ENCODE measurements at regions of chr21 and their contacts with region 1.

Region 1: DNA sequence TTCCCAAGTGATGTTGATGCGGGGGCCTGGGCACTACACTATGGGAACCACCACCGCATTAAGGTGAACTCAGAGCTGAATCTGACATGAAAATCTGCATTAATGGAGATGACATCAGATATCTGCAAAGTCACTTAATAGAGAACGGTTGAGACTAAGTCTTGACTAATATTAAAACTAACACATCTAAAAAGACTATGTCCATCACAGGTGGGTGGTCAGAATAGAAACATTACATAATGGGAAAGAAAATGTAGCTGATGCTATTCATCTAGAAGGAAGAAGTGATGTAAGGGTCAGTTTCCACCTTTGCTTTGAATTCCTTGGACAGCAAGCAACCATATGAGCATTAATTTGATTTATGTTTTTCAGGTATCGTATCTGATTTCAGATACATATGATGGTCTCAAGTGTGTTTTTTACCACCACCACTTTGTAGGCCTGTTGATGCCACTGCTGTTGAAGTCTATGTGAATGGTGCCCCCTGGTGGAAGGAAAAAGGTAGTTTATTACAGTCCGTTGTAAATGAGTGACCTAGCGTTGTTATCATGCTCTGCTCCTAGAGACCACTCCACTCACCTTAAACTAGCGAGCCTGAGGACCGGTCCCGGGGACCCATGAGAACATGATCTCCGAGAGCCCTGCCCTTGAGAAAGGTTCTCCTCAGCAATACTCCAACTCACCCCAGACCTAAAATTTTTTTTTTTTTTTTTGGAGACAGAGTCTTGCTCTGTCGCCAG is 73.5 kb downstream of the BACH1 start:
- DNase-seq: no peak
- H3K4me3 ChIP-seq: no peak overlapping the region
- H3K27ac ChIP-seq: no peak overlapping the region
- H3K4me1 ChIP-seq: no peaks in the 10 kb centered on the region
- H3K27me3 ChIP-seq: no peaks in the 10 kb centered on the region
- CTCF ChIP-seq: peak; percentile 73 to 82 (median 74)
- POLR2A ChIP-seq: no peak

Region 2: GRCh38 chr21:29096218-29097015 is 275.8 kb before region 1 on chr21:
- intact Hi-C with region 1: no loop called
- DNase-seq: no peak
- H3K4me3 ChIP-seq: no peak overlapping the region
- H3K27ac ChIP-seq: no peak overlapping the region
- H3K4me1 ChIP-seq: no peaks in the 10 kb centered on the region
- H3K27me3 ChIP-seq: no peaks in the 10 kb centered on the region
- CTCF ChIP-seq: no peak
- POLR2A ChIP-seq: no peak

Region 3: DNA sequence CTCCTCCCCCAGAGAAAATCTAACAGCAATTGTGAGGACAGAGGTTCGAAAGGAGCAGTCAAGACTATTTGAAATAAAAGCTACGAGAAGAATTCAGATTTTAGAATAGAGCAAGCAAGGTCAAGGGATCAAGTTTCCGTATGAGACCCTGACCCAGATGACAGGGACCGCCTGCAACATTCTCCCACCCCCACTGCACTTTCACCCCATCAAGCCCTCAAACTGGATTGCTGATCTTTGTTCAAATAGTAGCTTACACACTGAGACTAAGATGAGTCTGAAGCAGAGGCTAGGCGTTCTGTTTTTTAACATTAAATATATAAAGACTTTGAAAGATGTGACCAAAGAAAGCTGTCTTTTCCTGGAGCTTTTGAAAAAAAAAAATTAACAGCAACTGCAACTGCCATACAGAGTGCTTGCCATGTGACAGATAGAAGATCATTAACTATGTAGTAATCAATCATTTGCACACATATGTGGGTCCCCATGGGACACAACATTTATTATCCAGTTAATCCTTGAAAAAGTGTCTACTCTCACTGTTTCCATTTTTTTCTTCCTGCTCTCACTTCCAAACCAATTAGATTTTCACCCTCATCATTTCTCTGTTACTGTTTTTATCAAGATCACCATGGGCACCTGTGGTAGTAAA is 447.6 kb after region 1 on chr21:
- intact Hi-C with region 1: loop called (anchors 5 kb)
- DNase-seq: no peak
- H3K4me3 ChIP-seq: no peak overlapping the region
- H3K27ac ChIP-seq: no peak overlapping the region
- H3K4me1 ChIP-seq: no peaks in the 10 kb centered on the region
- H3K27me3 ChIP-seq: no peaks in the 10 kb centered on the region
- CTCF ChIP-seq: no peak
- POLR2A ChIP-seq: no peak